GM10248 (cell line): ENCODE measurements at regions of chr3 and their contacts with region 1.

Region 1: DNA sequence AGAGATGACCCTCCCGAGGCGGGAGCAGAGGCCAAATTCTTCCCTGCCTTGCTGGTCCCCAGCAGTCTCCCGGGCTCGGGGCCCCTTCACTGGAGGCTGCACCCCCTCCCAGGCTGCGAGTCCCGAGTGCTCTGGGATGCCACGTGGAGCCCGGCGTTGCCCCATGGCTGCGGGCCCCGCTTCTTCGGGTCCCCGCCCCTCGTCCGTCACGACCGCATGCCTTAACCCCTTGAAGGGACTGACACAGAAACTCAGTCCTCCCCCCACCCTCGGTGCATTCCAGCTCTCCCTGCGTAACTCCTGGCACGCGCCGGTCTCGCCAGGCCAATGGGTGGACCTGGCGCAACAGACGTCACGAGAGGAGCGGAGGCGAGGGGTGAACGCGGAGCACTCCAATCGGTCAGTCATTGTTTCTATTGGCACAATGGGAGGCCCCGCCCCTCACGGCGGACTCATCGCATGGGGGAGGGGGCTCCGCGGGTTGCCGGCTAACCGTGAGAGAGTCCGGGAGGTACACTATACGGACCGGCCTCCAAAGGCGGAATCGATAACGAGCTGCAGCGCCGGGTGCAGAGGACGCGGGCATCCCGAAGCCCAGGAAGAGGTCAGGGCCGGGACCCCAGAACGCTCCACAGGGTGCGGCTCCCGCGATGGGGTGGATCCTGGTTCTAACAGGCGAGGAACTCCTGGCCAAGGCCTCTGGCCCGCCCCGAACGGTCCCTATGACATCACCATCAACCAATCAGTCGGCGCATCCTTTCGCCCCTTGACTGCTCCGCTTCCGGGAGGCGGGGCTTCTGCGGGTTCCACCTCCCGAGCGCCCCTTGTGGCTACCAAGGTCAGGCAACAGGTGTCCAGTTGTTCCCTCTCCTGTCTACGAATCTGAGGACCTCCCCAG is 978 bp upstream of the CELSR3 start:
- DNase-seq: peak; percentile 100
- CTCF ChIP-seq: peak; percentile 86

Region 2: DNA sequence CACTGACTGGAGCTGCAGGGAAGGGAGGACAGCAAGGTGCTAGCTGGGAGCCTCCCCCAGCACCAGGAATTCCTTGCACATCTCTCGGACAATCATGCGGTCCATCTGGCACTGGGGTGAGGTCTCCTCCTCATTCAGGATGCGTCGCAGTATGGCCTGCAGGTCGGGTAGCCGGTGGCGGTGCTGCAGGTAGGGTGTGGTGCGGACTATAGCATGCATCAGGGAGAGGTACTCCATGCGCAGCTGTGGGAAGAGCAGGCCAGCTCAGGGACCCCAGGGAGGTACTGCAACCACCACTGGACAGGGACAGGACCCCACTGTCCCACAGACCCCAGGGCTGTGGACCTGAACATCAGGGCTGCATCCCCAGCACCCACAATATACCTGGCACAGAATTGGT is 10.8 kb after region 1 on chr3:
- CTCF ChIA-PET with region 1: interaction called, 12 read pairs
- POLR2A ChIA-PET with region 1: interaction called, 3 read pairs
- DNase-seq: no peak
- CTCF ChIP-seq: no peak

Region 3: GRCh38 chr3:48694610-48695392 is 31.1 kb after region 1 on chr3:
- CTCF ChIA-PET with region 1: no interaction called
- POLR2A ChIA-PET with region 1: no interaction called
- DNase-seq: no peak
- CTCF ChIP-seq: no peak

Region 4: GRCh38 chr3:48756640-48757039 is 93.0 kb after region 1 on chr3:
- CTCF ChIA-PET with region 1: no interaction called
- POLR2A ChIA-PET with region 1: no interaction called
- DNase-seq: no peak
- CTCF ChIP-seq: no peak

Region 5: DNA sequence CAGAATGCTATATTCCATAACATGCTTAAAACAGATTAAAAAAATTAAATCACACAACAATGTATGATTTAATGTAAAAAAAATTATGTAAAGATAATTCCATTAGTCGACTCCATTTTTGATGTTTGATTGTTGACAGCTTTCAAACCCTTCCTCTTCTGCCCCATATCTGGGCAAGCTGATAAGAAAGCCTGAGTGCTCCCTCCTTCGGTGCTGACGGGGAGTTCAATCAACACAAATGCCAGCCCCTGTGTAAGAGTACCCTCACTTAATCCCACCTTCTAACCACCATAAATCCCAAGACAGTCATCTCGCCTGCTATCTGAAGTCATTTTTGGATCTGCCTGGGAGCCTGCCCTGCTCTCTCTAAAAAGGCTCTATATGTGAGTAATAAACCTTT is 113.2 kb after region 1 on chr3:
- CTCF ChIA-PET with region 1: no interaction called
- POLR2A ChIA-PET with region 1: no interaction called
- DNase-seq: no peak
- CTCF ChIP-seq: no peak

Region 6: GRCh38 chr3:48855681-48856447 is 192.2 kb after region 1 on chr3:
- CTCF ChIA-PET with region 1: no interaction called
- POLR2A ChIA-PET with region 1: no interaction called
- DNase-seq: no peak
- CTCF ChIP-seq: no peak